ENCODE measurements at regions of chrX and their contacts with region 1.

Region 1: GRCh38 chrX:128460834-128461233 is 408.6 kb upstream of the ACTRT1 start:
- DNase-seq: peak; percentile 40
- ATAC-seq: 0 out of 2 replicates have a peak, but pooled peaks have one; percentile 31
- H3K4me3 ChIP-seq: no peak overlapping the region
- H3K27ac ChIP-seq: no peak overlapping the region
- H3K4me1 ChIP-seq: peaks cover 11% of the 10 kb centered on the region; the same call in 1 of the 2 replicates
- H3K27me3 ChIP-seq: no peaks in the 10 kb centered on the region
- CTCF ChIP-seq: peak; percentile 45

Region 2: DNA sequence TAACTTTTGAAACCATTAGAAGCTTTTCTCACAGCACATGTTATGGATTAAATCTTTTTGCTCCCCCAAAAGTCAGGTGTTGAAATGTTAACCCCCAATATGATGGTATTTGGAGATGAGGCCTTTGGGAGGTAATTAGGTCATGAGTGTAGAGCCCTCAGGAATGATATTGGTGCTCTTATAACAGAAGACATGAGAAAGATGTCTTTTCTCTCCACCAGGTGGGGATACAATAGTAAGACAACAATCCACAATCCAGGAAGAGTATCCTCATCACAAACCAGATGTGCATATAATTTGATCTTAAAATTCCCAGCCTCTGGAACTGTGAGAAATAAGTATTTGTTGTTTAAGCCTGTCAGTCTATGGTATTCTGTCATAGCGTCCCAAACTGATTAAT is 209.3 kb before region 1 on chrX:
- CTCF ChIA-PET with region 1: no interaction called
- POLR2A ChIA-PET with region 1: no interaction called
- intact Hi-C with region 1: loop called (anchors 1 kb)
- DNase-seq: peak; percentile 4
- ATAC-seq: 0 out of 2 replicates have a peak, but pooled peaks have one; percentile 27
- H3K4me3 ChIP-seq: no peak overlapping the region
- H3K27ac ChIP-seq: no peak overlapping the region
- H3K4me1 ChIP-seq: no peaks in the 10 kb centered on the region
- H3K27me3 ChIP-seq: no peaks in the 10 kb centered on the region
- CTCF ChIP-seq: 0 out of 2 replicates have a peak, but pooled peaks have one; percentile 25

Region 3: DNA sequence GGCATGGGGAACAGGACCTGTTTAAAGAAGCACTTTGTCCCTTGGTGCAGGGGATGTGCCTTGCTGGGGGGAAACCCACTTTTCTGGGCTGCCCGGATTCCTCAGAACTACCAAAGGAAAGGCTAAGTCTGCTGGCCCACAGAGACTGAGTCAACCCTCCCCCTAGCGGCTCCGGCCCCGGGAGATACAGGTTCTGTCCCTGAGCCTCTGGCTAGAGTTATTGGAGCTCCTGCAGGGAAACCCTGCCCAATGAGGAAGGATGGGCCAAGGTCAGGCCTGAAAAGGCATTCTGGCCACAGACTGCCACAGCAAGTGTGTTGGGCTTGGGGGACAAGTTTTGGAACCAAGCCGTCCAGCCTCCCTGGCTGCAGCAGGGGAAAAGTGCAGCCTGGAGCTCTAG is 82.3 kb after region 1 on chrX:
- CTCF ChIA-PET with region 1: no interaction called
- POLR2A ChIA-PET with region 1: no interaction called
- intact Hi-C with region 1: no loop called
- DNase-seq: no peak
- ATAC-seq: no peak
- H3K4me3 ChIP-seq: no peak overlapping the region
- H3K27ac ChIP-seq: no peak overlapping the region
- H3K4me1 ChIP-seq: no peaks in the 10 kb centered on the region
- H3K27me3 ChIP-seq: no peaks in the 10 kb centered on the region
- CTCF ChIP-seq: no peak

Region 4: GRCh38 chrX:128582036-128582435 is 121.2 kb after region 1 on chrX:
- CTCF ChIA-PET with region 1: no interaction called
- POLR2A ChIA-PET with region 1: no interaction called
- intact Hi-C with region 1: no loop called
- DNase-seq: no peak
- ATAC-seq: no peak
- H3K4me3 ChIP-seq: no peak overlapping the region
- H3K27ac ChIP-seq: no peak overlapping the region
- H3K4me1 ChIP-seq: no peaks in the 10 kb centered on the region
- H3K27me3 ChIP-seq: no peaks in the 10 kb centered on the region
- CTCF ChIP-seq: no peak

Measured in PC-3 (cell line).